Activated naive CD4-positive, alpha-beta T cell treated with anti-CD3 and anti-CD28 coated beads for 36 hours (primary cell): ENCODE measurements at regions of chr5 and their contacts with region 1.

Region 1: GRCh38 chr5:133779828-133780475 is 167.6 kb upstream of the FSTL4 start:
- DNase-seq: no peak
- H3K4me3 Mint-ChIP-seq: no peak overlapping the region
- H3K27ac Mint-ChIP-seq: no peak overlapping the region
- H3K4me1 Mint-ChIP-seq: no peaks in the 10 kb centered on the region
- H3K27me3 Mint-ChIP-seq: no peaks in the 10 kb centered on the region

Region 2: DNA sequence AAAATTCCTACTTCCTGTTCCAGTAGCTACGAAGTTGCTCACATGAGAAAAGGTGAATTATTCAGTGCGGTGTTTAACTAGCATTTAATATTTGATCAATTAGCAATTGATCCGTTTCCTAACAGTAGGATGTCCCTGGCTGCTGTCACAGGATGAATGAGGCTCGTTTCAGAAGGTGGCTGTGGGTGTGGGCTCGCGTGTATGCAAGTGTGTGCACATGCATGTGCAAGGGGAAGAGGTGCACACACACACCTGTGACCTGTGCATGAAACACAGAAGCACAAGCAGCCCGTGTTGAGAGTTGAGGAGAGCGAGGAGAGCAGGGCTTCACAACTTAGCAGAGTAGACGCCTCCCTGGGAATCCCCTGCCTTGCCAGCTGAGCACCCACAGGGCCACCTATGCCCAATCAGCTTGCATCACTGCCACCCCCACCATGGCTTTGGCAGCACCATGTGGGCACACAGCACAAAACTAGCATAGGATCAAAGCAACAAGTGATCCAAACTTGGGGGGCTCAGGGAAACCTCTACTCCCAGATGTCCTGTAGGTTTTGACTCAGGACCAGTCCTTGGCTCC is 81.3 kb after region 1 on chr5:
- CTCF ChIA-PET with region 1: no interaction called
- intact Hi-C with region 1: loop called (anchors 5 kb)
- DNase-seq: peak; percentile 31
- H3K4me3 Mint-ChIP-seq: no peak overlapping the region
- H3K27ac Mint-ChIP-seq: no peak overlapping the region
- H3K4me1 Mint-ChIP-seq: peaks cover 11% of the 10 kb centered on the region
- H3K27me3 Mint-ChIP-seq: no peaks in the 10 kb centered on the region

Region 3: GRCh38 chr5:134465816-134466240 is 685.9 kb after region 1 on chr5:
- CTCF ChIA-PET with region 1: no interaction called
- intact Hi-C with region 1: no loop called
- DNase-seq: peak; percentile 73
- H3K4me3 Mint-ChIP-seq: peak overlapping the region; percentile 81
- H3K27ac Mint-ChIP-seq: peak overlapping the region; percentile 81
- H3K4me1 Mint-ChIP-seq: peaks cover 19% of the 10 kb centered on the region
- H3K27me3 Mint-ChIP-seq: no peaks in the 10 kb centered on the region